Activated CD8-positive, alpha-beta T cell treated with anti-CD3 and anti-CD28 coated beads for 36 hours (primary cell): ENCODE measurements at regions of chr1 and their contacts with region 1.

Region 1: DNA sequence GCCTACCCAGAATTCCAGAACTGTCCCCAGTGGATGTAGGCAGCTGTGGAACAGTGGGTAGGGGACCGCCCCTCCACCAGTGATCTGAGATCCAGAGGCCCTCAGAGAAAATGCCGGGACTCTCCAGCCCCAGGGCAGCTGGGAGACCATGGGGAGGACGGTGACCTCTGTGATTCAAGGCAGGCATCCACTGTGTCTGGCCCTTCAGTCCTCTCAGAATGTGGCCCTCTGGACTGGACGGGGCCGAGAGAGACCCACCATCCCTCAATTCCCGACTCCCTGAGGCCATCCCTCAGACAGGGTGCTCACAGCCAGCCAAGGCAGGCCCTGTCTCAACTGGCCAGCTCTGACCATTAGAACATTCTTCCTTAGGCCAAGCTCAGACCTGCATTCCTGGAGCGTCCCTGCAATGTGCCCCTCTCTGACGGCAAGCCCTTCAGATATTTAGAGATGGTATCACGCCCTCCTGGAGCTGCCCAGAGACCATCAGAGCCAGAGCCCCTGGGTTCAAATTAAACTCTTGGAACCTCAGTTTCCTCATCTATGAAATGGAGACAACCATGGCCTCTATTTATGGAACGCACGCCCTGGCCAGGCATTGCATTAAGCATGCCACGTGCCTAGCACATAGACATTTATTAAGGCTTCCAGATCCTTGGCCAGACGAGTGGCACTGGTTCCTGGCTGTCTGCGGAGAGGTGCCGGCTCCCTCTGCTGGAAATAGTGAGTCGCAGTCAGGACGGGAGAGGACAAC is 9.6 kb upstream of the EPS8L3 start:
- DNase-seq: peak; percentile 84
- ATAC-seq: peak; percentile 86
- H3K4me3 Mint-ChIP-seq: no peak overlapping the region
- H3K27ac Mint-ChIP-seq: no peak overlapping the region
- H3K4me1 Mint-ChIP-seq: no peaks in the 10 kb centered on the region
- H3K27me3 Mint-ChIP-seq: no peaks in the 10 kb centered on the region
- CTCF ChIP-seq: peak; percentile 80

Region 2: DNA sequence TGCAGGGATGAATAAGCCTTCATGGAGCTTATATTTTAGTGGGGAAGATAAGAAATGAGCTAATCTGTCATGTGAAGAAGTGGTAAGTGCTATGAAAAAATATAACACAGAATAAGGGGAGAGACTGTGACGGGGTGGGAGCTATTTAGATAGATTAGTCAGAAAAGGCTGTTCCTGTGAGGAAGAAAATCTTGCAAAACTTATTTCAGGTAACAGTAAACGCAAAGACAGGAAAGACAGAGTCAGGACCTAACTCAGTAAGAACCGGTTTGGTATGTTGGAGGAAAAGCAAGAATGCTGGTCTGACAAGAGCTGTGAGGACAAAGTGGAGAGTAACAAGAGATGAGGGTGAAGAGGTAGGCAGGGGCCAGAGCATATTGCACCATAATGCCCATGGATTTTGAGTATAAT is 202.9 kb before region 1 on chr1:
- CTCF ChIA-PET with region 1: no interaction called
- POLR2A ChIA-PET with region 1: no interaction called
- intact Hi-C with region 1: no loop called
- DNase-seq: no peak
- ATAC-seq: no peak
- H3K4me3 Mint-ChIP-seq: no peak overlapping the region
- H3K27ac Mint-ChIP-seq: no peak overlapping the region
- H3K4me1 Mint-ChIP-seq: peaks cover 31% of the 10 kb centered on the region
- H3K27me3 Mint-ChIP-seq: no peaks in the 10 kb centered on the region
- CTCF ChIP-seq: no peak

Region 3: DNA sequence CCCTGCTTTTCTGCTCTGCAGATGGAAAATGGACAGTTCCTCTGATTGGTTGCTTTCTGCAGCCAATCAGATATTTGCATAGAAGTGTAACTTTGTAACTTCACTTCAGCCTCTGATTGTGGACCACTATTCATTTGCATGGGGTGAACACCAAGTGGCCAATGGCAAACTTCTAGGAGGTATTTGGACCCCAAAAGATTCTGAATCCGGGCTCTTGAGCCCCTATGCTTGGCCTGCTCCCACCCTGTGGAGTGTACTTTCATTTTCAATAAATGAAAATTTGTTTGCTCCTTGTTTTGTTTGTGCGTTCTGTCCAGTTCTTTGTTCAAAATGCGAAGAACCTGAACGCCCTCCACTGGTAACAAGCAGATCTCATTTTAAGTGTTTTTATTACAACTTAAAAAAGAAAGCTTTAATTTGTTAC is 123.8 kb before region 1 on chr1:
- CTCF ChIA-PET with region 1: interaction called, 70 read pairs
- POLR2A ChIA-PET with region 1: interaction called, 3 read pairs
- intact Hi-C with region 1: no loop called
- DNase-seq: no peak
- ATAC-seq: no peak
- H3K4me3 Mint-ChIP-seq: no peak overlapping the region
- H3K27ac Mint-ChIP-seq: no peak overlapping the region
- H3K4me1 Mint-ChIP-seq: no peaks in the 10 kb centered on the region
- H3K27me3 Mint-ChIP-seq: peaks cover 3% of the 10 kb centered on the region
- CTCF ChIP-seq: peak; percentile 32

Region 4: GRCh38 chr1:109790735-109791494 is 17.6 kb after region 1 on chr1:
- CTCF ChIA-PET with region 1: interaction called, 158 read pairs
- POLR2A ChIA-PET with region 1: interaction called, 5 read pairs
- intact Hi-C with region 1: no loop called
- DNase-seq: peak; percentile 95
- ATAC-seq: peak; percentile 94
- H3K4me3 Mint-ChIP-seq: no peak overlapping the region
- H3K27ac Mint-ChIP-seq: peak overlapping the region; percentile 92
- H3K4me1 Mint-ChIP-seq: peaks cover 63% of the 10 kb centered on the region
- H3K27me3 Mint-ChIP-seq: no peaks in the 10 kb centered on the region
- CTCF ChIP-seq: peak; percentile 80

Region 5: DNA sequence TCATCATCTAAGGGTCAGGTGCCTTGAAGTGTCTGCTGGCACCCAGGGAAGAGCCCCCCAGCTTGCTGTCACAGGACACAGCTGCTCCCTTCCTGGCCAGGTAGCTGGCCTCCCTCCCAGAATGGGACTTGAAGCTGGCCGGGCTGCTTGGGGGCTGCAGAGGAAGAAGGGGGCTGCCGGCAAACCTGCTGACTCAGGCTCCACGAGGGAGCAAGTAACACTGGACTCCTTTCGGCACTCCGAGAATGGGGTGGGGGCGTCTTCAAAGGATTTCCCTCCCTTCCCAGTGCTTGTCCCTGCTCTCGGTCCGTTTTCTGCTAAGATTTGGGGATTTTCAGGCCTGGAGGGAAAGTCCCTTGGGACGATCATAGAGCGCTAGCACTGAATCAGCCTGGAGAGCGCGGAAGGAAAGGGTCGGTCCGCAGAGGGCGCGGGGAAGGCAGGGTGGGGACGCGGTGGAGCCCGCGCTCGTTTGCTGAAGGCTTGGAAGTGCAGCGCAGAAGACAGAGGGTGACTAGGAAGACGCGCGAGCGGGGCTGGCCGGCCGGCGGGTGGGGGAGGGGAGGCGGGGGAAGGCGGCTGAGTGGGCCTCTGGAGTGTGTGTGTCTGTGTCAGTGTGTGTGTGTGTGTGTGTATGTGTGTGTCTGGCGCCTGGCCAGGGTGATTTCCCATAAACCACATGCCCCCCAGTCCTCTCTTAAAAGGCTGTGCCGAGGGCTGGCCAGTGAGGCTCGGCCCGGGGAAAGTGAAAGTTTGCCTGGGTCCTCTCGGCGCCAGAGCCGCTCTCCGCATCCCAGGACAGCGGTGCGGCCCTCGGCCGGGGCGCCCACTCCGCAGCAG is 137.0 kb after region 1 on chr1 and contains the start of gene CSF1:
- CTCF ChIA-PET with region 1: interaction called, 14 read pairs
- POLR2A ChIA-PET with region 1: no interaction called
- intact Hi-C with region 1: loop called (anchors 5 kb)
- DNase-seq: peak; percentile 78
- ATAC-seq: peak; percentile 41
- H3K4me3 Mint-ChIP-seq: peak within 1 kb of the TSS; percentile 90
- H3K27ac Mint-ChIP-seq: peak within 1 kb of the TSS; percentile 95
- H3K4me1 Mint-ChIP-seq: peaks cover 70% of the 10 kb centered on the region
- H3K27me3 Mint-ChIP-seq: no peaks in the 10 kb centered on the region
- CTCF ChIP-seq: no peak
- total RNA-seq, gene CSF1: 28.3 to 33.3 TPM

Region 6: GRCh38 chr1:109917768-109918606 is 144.7 kb after region 1 on chr1:
- CTCF ChIA-PET with region 1: interaction called, 19 read pairs
- POLR2A ChIA-PET with region 1: no interaction called
- intact Hi-C with region 1: loop called (anchors 5 kb)
- DNase-seq: no peak
- ATAC-seq: no peak
- H3K4me3 Mint-ChIP-seq: no peak overlapping the region
- H3K27ac Mint-ChIP-seq: no peak overlapping the region
- H3K4me1 Mint-ChIP-seq: peaks cover 12% of the 10 kb centered on the region
- H3K27me3 Mint-ChIP-seq: no peaks in the 10 kb centered on the region
- CTCF ChIP-seq: no peak

Region 7: GRCh38 chr1:109993885-109994284 is 220.6 kb after region 1 on chr1:
- CTCF ChIA-PET with region 1: interaction called, 745 read pairs
- POLR2A ChIA-PET with region 1: interaction called, 3 read pairs
- intact Hi-C with region 1: no loop called
- DNase-seq: no peak
- ATAC-seq: no peak
- H3K4me3 Mint-ChIP-seq: no peak overlapping the region
- H3K27ac Mint-ChIP-seq: no peak overlapping the region
- H3K4me1 Mint-ChIP-seq: peaks cover 21% of the 10 kb centered on the region
- H3K27me3 Mint-ChIP-seq: no peaks in the 10 kb centered on the region
- CTCF ChIP-seq: no peak

Region 8: GRCh38 chr1:110011527-110012041 is 238.3 kb after region 1 on chr1:
- CTCF ChIA-PET with region 1: interaction called, 16 read pairs
- POLR2A ChIA-PET with region 1: no interaction called
- intact Hi-C with region 1: no loop called
- DNase-seq: peak; percentile 40
- ATAC-seq: peak; percentile 92
- H3K4me3 Mint-ChIP-seq: no peak overlapping the region
- H3K27ac Mint-ChIP-seq: no peak overlapping the region
- H3K4me1 Mint-ChIP-seq: no peaks in the 10 kb centered on the region
- H3K27me3 Mint-ChIP-seq: no peaks in the 10 kb centered on the region
- CTCF ChIP-seq: peak; percentile 60